IMR-90 (cell line): ENCODE measurements at regions of chr1 and their contacts with region 1.

Region 1: GRCh38 chr1:233140974-233141373 is 154.6 kb downstream of the PCNX2 start:
- DNase-seq: no peak
- ATAC-seq: no peak
- H3K4me3 ChIP-seq: no peak overlapping the region
- H3K27ac ChIP-seq: peak overlapping the region; percentile 41; the same call in 1 of the 2 replicates
- H3K4me1 ChIP-seq: peaks cover 4% of the 10 kb centered on the region; the same call in 1 of the 2 replicates
- H3K27me3 ChIP-seq: no peaks in the 10 kb centered on the region
- CTCF ChIP-seq: no peak
- POLR2A ChIP-seq: no peak
- RAD21 ChIP-seq: no peak

Region 2: GRCh38 chr1:233078396-233078795 is 62.6 kb before region 1 on chr1:
- CTCF ChIA-PET with region 1: no interaction called
- POLR2A ChIA-PET with region 1: no interaction called
- dilution Hi-C with region 1: no loop called
- in situ Hi-C with region 1: loop called (anchors 10 kb)
- intact Hi-C with region 1: no loop called
- DNase-seq: no peak
- ATAC-seq: no peak
- H3K4me3 ChIP-seq: no peak overlapping the region
- H3K27ac ChIP-seq: peak overlapping the region; percentile 81; the same call in 1 of the 2 replicates
- H3K4me1 ChIP-seq: peaks cover 11% of the 10 kb centered on the region
- H3K27me3 ChIP-seq: peaks cover 6% of the 10 kb centered on the region
- CTCF ChIP-seq: no peak
- POLR2A ChIP-seq: no peak
- RAD21 ChIP-seq: no peak

Region 3: GRCh38 chr1:233157245-233157644 is 16.3 kb after region 1 on chr1:
- CTCF ChIA-PET with region 1: no interaction called
- POLR2A ChIA-PET with region 1: no interaction called
- dilution Hi-C with region 1: no loop called
- in situ Hi-C with region 1: no loop called
- intact Hi-C with region 1: loop called (anchors 1 kb)
- DNase-seq: no peak
- ATAC-seq: no peak
- H3K4me3 ChIP-seq: no peak overlapping the region
- H3K27ac ChIP-seq: no peak overlapping the region
- H3K4me1 ChIP-seq: no peaks in the 10 kb centered on the region
- H3K27me3 ChIP-seq: no peaks in the 10 kb centered on the region
- CTCF ChIP-seq: no peak
- POLR2A ChIP-seq: no peak
- RAD21 ChIP-seq: no peak